ENCODE measurements at regions of chr2 and their contacts with region 1.

Region 1: DNA sequence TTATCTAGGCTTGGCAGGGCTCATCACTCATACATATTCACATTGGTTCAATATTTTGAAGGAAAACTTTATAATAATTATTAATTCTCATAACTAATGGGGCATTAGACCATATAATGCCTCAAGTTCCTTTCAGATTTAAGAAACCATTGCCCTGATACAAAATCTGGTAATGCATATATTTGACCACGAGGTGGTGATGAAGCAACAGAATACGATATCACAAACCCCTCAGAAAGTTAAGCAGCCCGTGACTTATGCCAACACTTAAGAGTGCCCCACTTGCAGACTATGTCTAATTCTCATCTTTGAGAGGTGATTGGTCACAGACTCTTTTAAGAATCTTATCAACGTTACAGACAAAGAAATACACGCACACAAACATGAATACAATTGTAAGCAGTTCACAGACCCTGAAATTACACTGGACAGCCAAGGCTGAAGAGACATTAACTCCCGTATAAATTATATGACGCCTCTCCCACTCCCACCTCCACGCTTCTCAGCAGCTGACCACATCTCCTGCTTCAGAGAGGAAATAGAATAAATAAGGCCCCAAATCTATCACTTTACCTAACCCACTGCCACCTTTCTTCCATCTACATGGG is 20.7 kb upstream of the DNAH6 start:
- DNase-seq: no peak
- H3K4me3 ChIP-seq: no peak overlapping the region
- H3K27ac ChIP-seq: no peak overlapping the region
- H3K4me1 ChIP-seq: no peaks in the 10 kb centered on the region
- H3K27me3 ChIP-seq: no peaks in the 10 kb centered on the region
- CTCF ChIP-seq: peak; percentile 23 to 68 (median 58)
- EP300 ChIP-seq: no peak
- POLR2A ChIP-seq: no peak

Region 2: GRCh38 chr2:84631047-84631446 is 135.4 kb after region 1 on chr2:
- intact Hi-C with region 1: loop called (anchors 5 kb)
- DNase-seq: no peak
- H3K4me3 ChIP-seq: no peak overlapping the region
- H3K27ac ChIP-seq: no peak overlapping the region
- H3K4me1 ChIP-seq: no peaks in the 10 kb centered on the region
- H3K27me3 ChIP-seq: no peaks in the 10 kb centered on the region
- CTCF ChIP-seq: peak in 3 of 4 experiments; percentile 13 to 33 (median 30)
- EP300 ChIP-seq: no peak
- POLR2A ChIP-seq: no peak

Region 3: GRCh38 chr2:84881581-84882414 is 386.2 kb after region 1 on chr2:
- intact Hi-C with region 1: loop called (anchors 1 kb)
- DNase-seq: peak; percentile 81
- H3K4me3 ChIP-seq: peak overlapping the region; percentile 24 to 53 (median 46)
- H3K27ac ChIP-seq: no peak overlapping the region
- H3K4me1 ChIP-seq: peaks cover 0 to 29% (median 23%) of the 10 kb centered on the region in 4 donors
- H3K27me3 ChIP-seq: peaks cover 18 to 59% (median 26%) of the 10 kb centered on the region in 3 donors
- CTCF ChIP-seq: peak; percentile 28 to 76 (median 66)
- EP300 ChIP-seq: no peak
- POLR2A ChIP-seq: no peak